ENCODE measurements at regions of chr16 and their contacts with region 1.

Region 1: GRCh38 chr16:68811503-68811902 is 31.8 kb upstream of the TANGO6 start:
- DNase-seq: no peak
- H3K4me3 ChIP-seq: no peak overlapping the region
- CTCF ChIP-seq: no peak
- POLR2A ChIP-seq: no peak

Region 2: GRCh38 chr16:68696514-68696913 is 115.0 kb before region 1 on chr16:
- intact Hi-C with region 1: loop called (anchors 10 kb)
- DNase-seq: no peak
- H3K4me3 ChIP-seq: no peak overlapping the region
- CTCF ChIP-seq: no peak
- POLR2A ChIP-seq: no peak

Region 3: GRCh38 chr16:68985855-68986254 is 174.4 kb after region 1 on chr16:
- intact Hi-C with region 1: no loop called
- DNase-seq: no peak
- H3K4me3 ChIP-seq: no peak overlapping the region
- CTCF ChIP-seq: no peak
- POLR2A ChIP-seq: no peak